ENCODE measurements at regions of chr15 and their contacts with region 1.

Region 1: DNA sequence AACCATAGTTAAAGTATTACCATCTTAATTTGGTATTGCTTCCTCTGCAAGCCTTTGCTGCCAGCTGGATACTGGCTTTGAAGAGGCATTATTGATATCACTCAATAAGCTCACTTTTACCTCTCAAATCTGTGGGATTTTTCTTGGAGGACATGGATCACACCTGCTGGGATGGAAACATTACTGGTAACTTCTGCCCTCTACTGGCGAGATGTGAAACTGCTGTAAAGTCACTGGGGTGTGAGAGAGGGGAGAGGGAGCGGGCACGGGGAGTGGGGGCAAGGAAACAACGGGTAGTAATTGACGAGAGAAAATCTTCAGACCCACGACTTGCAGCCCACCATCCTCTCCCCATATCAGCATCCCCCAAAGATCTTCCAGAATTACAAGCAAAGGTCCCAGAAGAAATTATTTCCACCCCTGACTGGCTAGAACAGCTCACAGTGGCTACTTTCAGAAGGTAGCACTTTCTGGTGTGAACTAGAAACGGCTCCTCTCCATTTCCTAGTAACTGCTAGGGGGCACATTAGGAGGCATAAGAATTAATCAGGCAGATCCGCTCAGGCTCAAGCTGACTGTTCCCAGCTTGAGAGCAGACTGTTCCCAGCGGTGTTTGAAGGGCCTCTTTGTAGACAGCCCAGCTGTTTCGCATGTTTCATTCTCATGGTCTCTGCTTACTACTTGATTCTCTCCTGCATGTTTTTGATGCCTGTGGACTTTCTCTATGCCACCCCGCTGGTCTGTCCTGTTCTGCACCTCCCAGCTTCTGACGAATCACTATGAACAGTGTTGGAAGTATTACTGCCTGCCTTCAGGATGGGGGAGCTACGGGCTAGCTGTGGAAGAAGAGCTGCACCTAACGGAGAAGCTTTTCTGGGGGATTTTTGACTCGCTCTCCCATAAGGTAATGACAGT is 230.4 kb upstream of the CHRM5 start:
- DNase-seq: peak; percentile 78
- ATAC-seq: peak; percentile 86
- H3K4me3 Mint-ChIP-seq: peak overlapping the region; percentile 71
- H3K27ac Mint-ChIP-seq: peak overlapping the region; percentile 31; the same call in 1 of the 2 replicates
- H3K4me1 Mint-ChIP-seq: peaks cover 13% of the 10 kb centered on the region
- H3K27me3 Mint-ChIP-seq: no peaks in the 10 kb centered on the region; the same call in 1 of the 2 replicates
- CTCF ChIP-seq: peak; percentile 68

Region 2: DNA sequence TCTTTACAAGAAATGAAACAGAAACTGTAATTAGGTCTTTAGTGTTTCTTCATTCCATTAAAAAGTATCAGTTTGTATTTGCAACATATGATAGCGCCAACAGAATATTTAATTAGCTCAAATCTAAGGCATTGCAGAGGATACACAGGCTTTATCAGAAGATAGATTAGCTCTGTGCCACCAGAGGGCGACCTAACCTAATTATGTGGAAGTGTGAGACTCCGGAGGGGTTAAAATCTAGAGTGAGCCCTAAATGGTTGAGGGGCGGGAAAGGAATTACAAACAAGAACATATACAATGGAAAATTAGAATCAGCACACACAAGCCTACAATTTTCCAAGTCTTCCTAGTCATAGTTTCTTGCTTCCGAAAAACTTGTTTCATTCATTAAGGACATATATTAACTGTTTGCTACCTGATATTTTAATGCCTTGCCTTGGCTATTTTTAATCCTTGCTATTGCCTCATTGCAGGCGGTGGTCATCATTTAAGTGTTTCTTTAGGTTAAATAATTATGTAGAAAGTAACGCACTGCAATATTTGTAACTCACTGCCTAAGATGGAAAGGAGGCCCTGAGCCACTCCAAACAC is 445.1 kb before region 1 on chr15:
- CTCF ChIA-PET with region 1: interaction called, 39 read pairs
- POLR2A ChIA-PET with region 1: no interaction called
- DNase-seq: peak; percentile 74
- ATAC-seq: peak; percentile 88
- H3K4me3 Mint-ChIP-seq: no peak overlapping the region
- H3K27ac Mint-ChIP-seq: no peak overlapping the region
- H3K4me1 Mint-ChIP-seq: 0 out of 2 replicates have a peak, but pooled peaks cover 4% of the 10 kb centered on the region
- H3K27me3 Mint-ChIP-seq: no peaks in the 10 kb centered on the region
- CTCF ChIP-seq: peak; percentile 46; the same call in 1 of the 2 replicates

Region 3: GRCh38 chr15:33309602-33310276 is 428.2 kb before region 1 on chr15:
- CTCF ChIA-PET with region 1: interaction called, 12 read pairs
- POLR2A ChIA-PET with region 1: no interaction called
- DNase-seq: peak; percentile 51
- ATAC-seq: peak; percentile 53
- H3K4me3 Mint-ChIP-seq: peak overlapping the region; percentile 82
- H3K27ac Mint-ChIP-seq: no peak overlapping the region
- H3K4me1 Mint-ChIP-seq: peaks cover 27% of the 10 kb centered on the region
- H3K27me3 Mint-ChIP-seq: peaks cover 54% of the 10 kb centered on the region
- CTCF ChIP-seq: no peak; the same call in 1 of the 2 replicates

Region 4: DNA sequence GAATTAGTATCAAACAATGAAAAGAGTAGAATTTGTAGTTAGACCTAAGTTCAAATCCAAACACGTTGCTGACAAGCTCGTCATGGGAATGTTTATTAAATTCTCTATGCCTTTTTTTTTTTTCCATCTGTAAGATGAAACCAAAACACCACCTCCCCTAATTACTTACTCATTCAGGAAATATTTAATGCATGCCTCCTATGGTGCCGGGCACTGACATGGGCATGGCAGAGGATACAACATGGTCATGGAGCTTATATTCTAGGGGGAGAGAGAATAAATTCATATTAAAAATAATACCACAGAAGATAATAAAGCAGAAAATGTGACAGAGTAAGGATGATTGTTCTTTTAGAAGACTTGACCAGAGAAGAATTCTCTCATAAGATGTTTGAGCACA is 211.4 kb before region 1 on chr15:
- CTCF ChIA-PET with region 1: no interaction called
- POLR2A ChIA-PET with region 1: no interaction called
- DNase-seq: no peak
- ATAC-seq: no peak
- H3K4me3 Mint-ChIP-seq: no peak overlapping the region
- H3K27ac Mint-ChIP-seq: no peak overlapping the region
- H3K4me1 Mint-ChIP-seq: no peaks in the 10 kb centered on the region
- H3K27me3 Mint-ChIP-seq: no peaks in the 10 kb centered on the region
- CTCF ChIP-seq: no peak

Region 5: GRCh38 chr15:33722005-33722672 is 15.8 kb before region 1 on chr15:
- CTCF ChIA-PET with region 1: interaction called, 18 read pairs
- POLR2A ChIA-PET with region 1: no interaction called
- DNase-seq: no peak
- ATAC-seq: no peak
- H3K4me3 Mint-ChIP-seq: no peak overlapping the region
- H3K27ac Mint-ChIP-seq: no peak overlapping the region
- H3K4me1 Mint-ChIP-seq: no peaks in the 10 kb centered on the region
- H3K27me3 Mint-ChIP-seq: no peaks in the 10 kb centered on the region
- CTCF ChIP-seq: no peak

Region 6: GRCh38 chr15:33926260-33926659 is 188.3 kb after region 1 on chr15:
- CTCF ChIA-PET with region 1: no interaction called
- POLR2A ChIA-PET with region 1: no interaction called
- DNase-seq: no peak
- ATAC-seq: no peak
- H3K4me3 Mint-ChIP-seq: no peak overlapping the region
- H3K27ac Mint-ChIP-seq: no peak overlapping the region; the same call in 1 of the 2 replicates
- H3K4me1 Mint-ChIP-seq: no peaks in the 10 kb centered on the region
- H3K27me3 Mint-ChIP-seq: no peaks in the 10 kb centered on the region
- CTCF ChIP-seq: no peak

Region 7: GRCh38 chr15:33963831-33964664 is 226.1 kb after region 1 on chr15:
- CTCF ChIA-PET with region 1: interaction called, 22 read pairs
- POLR2A ChIA-PET with region 1: no interaction called
- DNase-seq: no peak
- ATAC-seq: peak; percentile 80
- H3K4me3 Mint-ChIP-seq: no peak overlapping the region
- H3K27ac Mint-ChIP-seq: no peak overlapping the region
- H3K4me1 Mint-ChIP-seq: peaks cover 7% of the 10 kb centered on the region; the same call in 1 of the 2 replicates
- H3K27me3 Mint-ChIP-seq: no peaks in the 10 kb centered on the region
- CTCF ChIP-seq: no peak